CD4-positive, alpha-beta T cell (primary cell): ENCODE measurements at regions of chr1 and their contacts with region 1.

Region 1: DNA sequence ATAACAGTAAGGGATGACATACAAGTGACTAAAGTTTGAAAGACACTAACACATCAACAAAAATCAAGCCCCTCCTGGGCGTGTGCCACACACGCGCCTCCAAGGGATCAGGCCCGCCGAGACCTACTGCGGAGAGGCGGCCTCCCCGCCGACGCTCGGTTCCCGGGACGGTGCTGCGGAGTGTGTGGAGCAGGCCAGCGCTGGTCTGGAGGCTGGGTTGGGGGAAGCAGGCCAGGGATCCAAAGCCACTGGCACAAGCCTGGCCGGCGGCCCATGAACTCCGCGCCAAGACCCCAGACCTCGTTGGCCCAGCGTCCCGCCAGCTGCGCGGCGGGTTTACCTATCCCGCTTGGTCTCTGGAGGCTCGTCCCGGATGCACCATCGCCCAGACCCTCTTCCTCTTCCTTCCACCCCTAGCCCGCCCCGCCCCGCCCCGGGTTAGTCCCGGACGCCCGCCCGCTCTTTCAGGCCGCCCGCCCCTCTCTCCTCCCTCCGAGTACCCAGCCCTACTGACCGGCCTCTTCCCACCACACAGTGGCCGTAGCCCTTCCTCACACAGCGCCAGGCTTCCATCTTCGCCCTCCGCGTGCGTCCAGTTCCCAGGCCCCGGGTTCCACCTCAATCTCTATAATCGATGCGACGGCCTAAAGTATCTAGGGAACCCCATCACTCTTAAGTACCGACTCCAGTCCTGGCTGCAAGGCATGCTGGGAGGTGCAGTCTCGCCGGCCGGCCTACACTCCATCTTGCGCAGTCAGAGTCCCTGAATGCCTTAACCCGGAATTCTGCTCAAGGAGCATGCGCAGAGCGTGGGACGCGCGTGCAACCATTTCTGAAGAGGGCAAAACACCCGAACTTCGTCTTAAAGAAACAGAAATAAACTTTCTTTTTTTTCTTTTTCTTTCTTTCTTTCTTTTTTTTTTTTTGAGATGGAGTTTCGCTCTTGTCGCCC is at the start of gene ANGEL2:
- DNase-seq: peak; percentile 88 to 99 (median 94)
- ATAC-seq: peak; percentile 98
- H3K4me3 ChIP-seq: peak within 1 kb of the TSS; percentile 72
- H3K4me3 Mint-ChIP-seq: peak within 1 kb of the TSS; percentile 99
- H3K27ac ChIP-seq: peak within 1 kb of the TSS; percentile 75 to 86
- H3K27ac Mint-ChIP-seq: peak within 1 kb of the TSS; percentile 96
- H3K4me1 ChIP-seq: peaks cover 12% of the 10 kb centered on the region
- H3K4me1 Mint-ChIP-seq: peaks cover 44% of the 10 kb centered on the region
- H3K27me3 ChIP-seq: no peaks in the 10 kb centered on the region
- H3K27me3 Mint-ChIP-seq: no peaks in the 10 kb centered on the region
- CTCF ChIP-seq: no peak
- total RNA-seq, gene ANGEL2: 53.0 to 56.2 TPM

Region 2: GRCh38 chr1:212035123-212035834 is 980.1 kb before region 1 on chr1 and contains the starts of genes DTL and INTS7:
- CTCF ChIA-PET with region 1: no interaction called
- POLR2A ChIA-PET with region 1: no interaction called
- intact Hi-C with region 1: loop called in 1 of 2 experiments (anchors 5 kb)
- DNase-seq: peak; percentile 94 to 100 (median 98)
- ATAC-seq: peak; percentile 88
- H3K4me3 ChIP-seq: peak within 1 kb of the TSS; percentile 83
- H3K4me3 Mint-ChIP-seq: peak within 1 kb of the TSS; percentile 95
- H3K27ac ChIP-seq: peak within 1 kb of the TSS; percentile 55 to 77
- H3K27ac Mint-ChIP-seq: peak within 1 kb of the TSS; percentile 95
- H3K4me1 ChIP-seq: peaks cover 16% of the 10 kb centered on the region
- H3K4me1 Mint-ChIP-seq: peaks cover 66% of the 10 kb centered on the region
- H3K27me3 ChIP-seq: no peaks in the 10 kb centered on the region
- H3K27me3 Mint-ChIP-seq: no peaks in the 10 kb centered on the region
- CTCF ChIP-seq: peak; percentile 99
- total RNA-seq, gene DTL: 0.49 to 0.64 TPM
- total RNA-seq, gene INTS7: 2.9 to 3.2 TPM

Region 3: GRCh38 chr1:212791676-212792395 is 223.5 kb before region 1 on chr1 and contains the starts of genes NSL1 and TATDN3:
- CTCF ChIA-PET with region 1: no interaction called
- POLR2A ChIA-PET with region 1: no interaction called
- intact Hi-C with region 1: loop called (anchors 2 to 10 kb)
- DNase-seq: peak; percentile 84 to 98 (median 94)
- ATAC-seq: peak; percentile 87
- H3K4me3 ChIP-seq: peak within 1 kb of the TSS; percentile 71
- H3K4me3 Mint-ChIP-seq: peak within 1 kb of the TSS; percentile 96
- H3K27ac ChIP-seq: peak within 1 kb of the TSS; percentile 73 to 77
- H3K27ac Mint-ChIP-seq: peak within 1 kb of the TSS; percentile 90
- H3K4me1 ChIP-seq: peaks cover 31% of the 10 kb centered on the region
- H3K4me1 Mint-ChIP-seq: peaks cover 41% of the 10 kb centered on the region
- H3K27me3 ChIP-seq: no peaks in the 10 kb centered on the region
- H3K27me3 Mint-ChIP-seq: peaks cover 4% of the 10 kb centered on the region
- CTCF ChIP-seq: no peak
- total RNA-seq, gene NSL1: 14.1 to 15.7 TPM
- total RNA-seq, gene TATDN3: 12.2 to 13.8 TPM

Region 4: DNA sequence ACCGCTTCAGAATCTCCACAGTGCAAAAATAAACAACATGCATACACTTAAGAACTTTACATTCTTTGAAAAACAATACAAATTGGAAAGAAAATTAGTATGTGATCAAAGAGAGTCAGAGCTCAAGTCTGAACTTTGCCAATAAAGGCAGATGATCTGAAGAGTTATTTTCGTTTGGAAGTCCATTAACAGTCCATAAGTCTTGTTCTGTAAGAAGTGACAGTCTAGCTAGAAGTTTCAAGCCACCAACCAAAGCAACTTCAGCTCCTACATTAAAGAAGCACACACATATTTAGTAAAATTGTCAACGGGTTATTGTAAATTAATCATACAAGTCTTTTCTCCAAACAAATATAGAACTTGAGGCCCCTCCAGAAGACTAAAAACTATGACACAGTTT is 20.4 kb before region 1 on chr1:
- CTCF ChIA-PET with region 1: no interaction called
- POLR2A ChIA-PET with region 1: no interaction called
- intact Hi-C with region 1: loop called in 1 of 2 experiments (anchors 2 kb)
- DNase-seq: no peak
- ATAC-seq: no peak
- H3K4me3 ChIP-seq: no peak overlapping the region
- H3K4me3 Mint-ChIP-seq: no peak overlapping the region
- H3K27ac ChIP-seq: no peak overlapping the region
- H3K27ac Mint-ChIP-seq: no peak overlapping the region
- H3K4me1 ChIP-seq: no peaks in the 10 kb centered on the region
- H3K4me1 Mint-ChIP-seq: peaks cover 8% of the 10 kb centered on the region
- H3K27me3 ChIP-seq: no peaks in the 10 kb centered on the region
- H3K27me3 Mint-ChIP-seq: no peaks in the 10 kb centered on the region
- CTCF ChIP-seq: no peak

Region 5: GRCh38 chr1:213585959-213586586 is 570.7 kb after region 1 on chr1:
- CTCF ChIA-PET with region 1: no interaction called
- POLR2A ChIA-PET with region 1: no interaction called
- intact Hi-C with region 1: no loop called
- DNase-seq: no peak
- ATAC-seq: no peak
- H3K4me3 ChIP-seq: no peak overlapping the region
- H3K4me3 Mint-ChIP-seq: no peak overlapping the region
- H3K27ac ChIP-seq: no peak overlapping the region
- H3K27ac Mint-ChIP-seq: no peak overlapping the region
- H3K4me1 ChIP-seq: no peaks in the 10 kb centered on the region
- H3K4me1 Mint-ChIP-seq: peaks cover 6% of the 10 kb centered on the region
- H3K27me3 ChIP-seq: no peaks in the 10 kb centered on the region
- H3K27me3 Mint-ChIP-seq: no peaks in the 10 kb centered on the region
- CTCF ChIP-seq: no peak